Mammary epithelial cell (primary cell): ENCODE measurements at regions of chr1 and their contacts with region 1.

Region 1: GRCh38 chr1:203871107-203871875 is 9.9 kb downstream of the SNRPE start:
- DNase-seq: peak; percentile 38
- H3K4me3 ChIP-seq: no peak overlapping the region
- H3K27ac ChIP-seq: no peak overlapping the region
- H3K4me1 ChIP-seq: no peaks in the 10 kb centered on the region
- H3K27me3 ChIP-seq: no peaks in the 10 kb centered on the region
- CTCF ChIP-seq: peak; percentile 89 to 98

Region 2: GRCh38 chr1:204032632-204033235 is 161.4 kb after region 1 on chr1:
- CTCF ChIA-PET with region 1: interaction called, 6 read pairs
- dilution Hi-C with region 1: loop called (anchors 5 kb)
- in situ Hi-C with region 1: no loop called
- intact Hi-C with region 1: no loop called
- DNase-seq: no peak
- H3K4me3 ChIP-seq: no peak overlapping the region
- H3K27ac ChIP-seq: no peak overlapping the region
- H3K4me1 ChIP-seq: no peaks in the 10 kb centered on the region
- H3K27me3 ChIP-seq: no peaks in the 10 kb centered on the region
- CTCF ChIP-seq: no peak

Region 3: GRCh38 chr1:204128964-204129896 is 257.9 kb after region 1 on chr1:
- CTCF ChIA-PET with region 1: interaction called, 21 read pairs
- dilution Hi-C with region 1: no loop called
- in situ Hi-C with region 1: loop called (anchors 5 kb)
- intact Hi-C with region 1: loop called (anchors 1 kb)
- DNase-seq: peak; percentile 31
- H3K4me3 ChIP-seq: peak overlapping the region; percentile 18 to 45 (median 31)
- H3K27ac ChIP-seq: no peak overlapping the region
- H3K4me1 ChIP-seq: peaks cover 35% of the 10 kb centered on the region
- H3K27me3 ChIP-seq: no peaks in the 10 kb centered on the region
- CTCF ChIP-seq: peak; percentile 66 to 87

Region 4: DNA sequence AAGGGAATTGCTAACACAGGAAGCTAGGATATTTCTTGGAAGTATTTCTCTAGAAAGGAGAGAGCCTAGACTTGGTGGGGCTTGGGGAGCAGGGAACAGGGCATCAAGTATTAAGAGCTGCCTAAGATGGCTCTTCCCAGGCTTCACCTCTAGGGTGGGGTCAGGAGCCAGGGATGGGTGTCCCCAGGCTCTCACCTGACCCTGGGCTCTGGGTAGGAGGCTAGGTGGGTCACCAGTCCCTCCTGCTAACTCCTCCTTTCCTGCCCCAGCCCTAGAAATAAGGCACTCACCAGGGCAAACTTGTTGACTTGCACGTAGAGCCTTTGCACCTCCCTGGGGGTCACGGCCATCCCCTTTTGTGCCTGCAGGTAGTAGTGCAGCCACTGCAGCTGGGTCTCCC is 265.5 kb after region 1 on chr1:
- CTCF ChIA-PET with region 1: no interaction called
- dilution Hi-C with region 1: loop called (anchors 5 kb)
- in situ Hi-C with region 1: no loop called
- intact Hi-C with region 1: no loop called
- DNase-seq: no peak
- H3K4me3 ChIP-seq: no peak overlapping the region
- H3K27ac ChIP-seq: no peak overlapping the region
- H3K4me1 ChIP-seq: peaks cover 3% of the 10 kb centered on the region
- H3K27me3 ChIP-seq: no peaks in the 10 kb centered on the region
- CTCF ChIP-seq: no peak

Region 5: DNA sequence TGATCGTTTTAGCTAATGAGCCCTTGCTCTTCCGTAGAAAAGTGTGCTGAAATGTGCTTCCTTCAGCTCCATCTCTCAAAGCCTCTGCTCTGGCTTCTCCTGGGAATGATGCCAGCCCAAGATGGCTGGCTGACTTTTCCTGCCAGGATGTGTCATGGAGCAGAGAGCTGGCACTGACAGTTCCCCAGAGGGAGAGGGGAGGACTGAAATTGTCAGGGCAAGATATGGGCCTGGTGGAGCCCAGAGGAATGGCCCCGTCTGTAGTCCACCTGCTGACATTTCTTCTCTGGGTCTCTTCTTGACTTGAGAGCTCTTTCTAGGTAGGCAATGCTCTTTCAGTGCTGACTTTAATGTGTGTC is 513.7 kb after region 1 on chr1:
- CTCF ChIA-PET with region 1: no interaction called
- dilution Hi-C with region 1: loop called (anchors 10 kb)
- in situ Hi-C with region 1: no loop called
- intact Hi-C with region 1: no loop called
- DNase-seq: peak; percentile 27
- H3K4me3 ChIP-seq: no peak overlapping the region
- H3K27ac ChIP-seq: no peak overlapping the region
- H3K4me1 ChIP-seq: peaks cover 7% of the 10 kb centered on the region
- H3K27me3 ChIP-seq: no peaks in the 10 kb centered on the region
- CTCF ChIP-seq: no peak